ENCODE measurements at regions of chr2 and their contacts with region 1.

Region 1: DNA sequence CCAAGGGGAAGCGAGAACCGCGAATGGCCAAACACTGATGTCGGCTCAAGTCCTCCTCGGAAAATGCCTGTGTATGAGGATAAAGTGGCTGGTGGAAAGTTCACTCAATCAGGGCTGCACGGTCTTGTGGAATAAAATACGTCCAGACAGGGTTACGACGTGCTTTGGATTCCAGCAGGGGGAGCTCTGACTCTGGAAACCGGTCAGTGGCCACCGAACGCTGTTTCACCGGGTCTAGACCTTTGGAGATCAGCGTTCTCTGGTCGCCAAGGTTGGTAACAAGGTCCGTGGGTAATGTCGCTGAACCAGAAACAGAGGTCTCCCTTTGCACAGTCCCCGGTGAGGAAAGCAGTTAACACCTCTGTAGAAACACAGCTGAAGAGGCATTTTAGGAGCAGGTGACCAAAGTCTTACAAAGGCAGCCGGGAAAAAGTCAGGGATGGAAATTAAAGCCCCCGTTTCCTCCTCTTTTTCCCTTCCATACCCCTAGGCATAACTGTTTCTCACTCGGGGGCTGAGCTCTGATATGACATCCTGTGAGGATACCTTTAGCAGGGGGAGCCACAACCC is 47.8 kb downstream of the CDCA7 start:
- DNase-seq: peak; percentile 81 to 86
- ATAC-seq: peak; percentile 95 to 98
- H3K4me3 ChIP-seq: peak overlapping the region; percentile 43
- H3K27ac ChIP-seq: peak overlapping the region; percentile 70 to 80
- H3K4me1 ChIP-seq: peaks cover 17% of the 10 kb centered on the region; the same call in 2 of the 3 replicates
- CTCF ChIP-seq: peak; percentile 94
- EP300 ChIP-seq: no peak
- POLR2A ChIP-seq: no peak
- RAD21 ChIP-seq: peak; percentile 99

Region 2: GRCh38 chr2:173414823-173415322 is 12.4 kb after region 1 on chr2:
- CTCF ChIA-PET with region 1: interaction called, 42 read pairs
- POLR2A ChIA-PET with region 1: no interaction called
- DNase-seq: peak in 1 of 2 experiments; percentile 50
- ATAC-seq: peak; percentile 49 to 68; a peak in 3 of 6 replicates
- H3K4me3 ChIP-seq: no peak overlapping the region
- H3K27ac ChIP-seq: peak overlapping the region; percentile 67
- H3K4me1 ChIP-seq: peaks cover 31% of the 10 kb centered on the region
- CTCF ChIP-seq: no peak
- EP300 ChIP-seq: no peak
- POLR2A ChIP-seq: no peak
- RAD21 ChIP-seq: no peak

Region 3: GRCh38 chr2:173448938-173449471 is 46.5 kb after region 1 on chr2:
- CTCF ChIA-PET with region 1: interaction called, 121 read pairs
- POLR2A ChIA-PET with region 1: interaction called, 14 read pairs
- DNase-seq: peak; percentile 73 to 90
- ATAC-seq: peak; percentile 97 to 99
- H3K4me3 ChIP-seq: peak overlapping the region; percentile 38
- H3K27ac ChIP-seq: peak overlapping the region; percentile 80 to 90
- H3K4me1 ChIP-seq: no peaks in the 10 kb centered on the region
- CTCF ChIP-seq: peak; percentile 78
- EP300 ChIP-seq: no peak
- POLR2A ChIP-seq: peak; percentile 55; the same call in 1 of the 2 replicates
- RAD21 ChIP-seq: peak; percentile 82 to 87

Region 4: GRCh38 chr2:173667417-173667816 is 264.9 kb after region 1 on chr2:
- CTCF ChIA-PET with region 1: interaction called, 10 read pairs
- POLR2A ChIA-PET with region 1: no interaction called
- DNase-seq: peak in 1 of 2 experiments; percentile 64
- ATAC-seq: peak; percentile 89 to 94
- H3K4me3 ChIP-seq: no peak overlapping the region
- H3K27ac ChIP-seq: peak overlapping the region; percentile 8 to 23; a peak in 1 of 6 replicates
- H3K4me1 ChIP-seq: peaks cover 6% of the 10 kb centered on the region; the same call in 1 of the 3 replicates
- CTCF ChIP-seq: peak; percentile 34; the same call in 2 of the 3 replicates
- EP300 ChIP-seq: no peak
- POLR2A ChIP-seq: no peak
- RAD21 ChIP-seq: peak; percentile 62 to 80

Region 5: DNA sequence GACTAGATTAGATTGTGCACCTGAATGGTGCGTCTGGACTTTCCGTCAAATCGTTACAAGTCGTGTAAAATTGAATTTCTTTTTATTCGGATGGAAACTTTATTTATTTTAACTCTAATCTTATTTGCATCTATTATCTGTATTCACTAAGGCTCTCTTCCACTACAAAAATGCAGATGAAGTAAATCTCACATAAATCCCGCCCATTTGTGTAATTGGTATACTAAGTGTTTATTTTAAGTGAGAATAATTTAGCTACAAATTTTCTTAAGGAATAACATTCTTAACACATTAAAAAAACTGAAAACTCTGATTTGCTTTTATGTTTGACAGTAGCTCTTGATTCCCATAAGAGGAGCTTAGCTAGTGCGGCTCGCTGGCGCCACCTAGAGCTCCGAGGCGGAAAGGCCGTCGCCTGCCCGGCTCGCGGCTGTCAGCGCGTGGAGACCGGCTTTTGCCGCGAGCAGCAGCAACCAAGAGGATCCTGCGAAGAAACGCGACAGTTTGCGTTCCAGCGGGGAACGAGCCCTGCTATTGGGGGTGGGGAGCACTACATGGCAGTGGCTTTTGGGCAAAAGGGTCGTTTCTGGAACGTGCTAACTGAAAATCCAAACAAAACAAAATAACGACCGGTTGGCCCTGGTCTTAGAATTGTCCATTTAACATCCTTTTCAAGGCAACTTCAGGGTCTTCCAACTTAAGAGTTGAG is 939.0 kb after region 1 on chr2:
- CTCF ChIA-PET with region 1: interaction called, 26 read pairs
- POLR2A ChIA-PET with region 1: no interaction called
- DNase-seq: peak in 1 of 2 experiments; percentile 88
- ATAC-seq: peak; percentile 23 to 69; a peak in 4 of 6 replicates
- H3K4me3 ChIP-seq: peak overlapping the region; percentile 64; the same call in 1 of the 3 replicates
- H3K27ac ChIP-seq: peak overlapping the region; percentile 95 to 97
- H3K4me1 ChIP-seq: peaks cover 16% of the 10 kb centered on the region; the same call in 2 of the 3 replicates
- CTCF ChIP-seq: peak; percentile 96
- EP300 ChIP-seq: no peak
- POLR2A ChIP-seq: no peak
- RAD21 ChIP-seq: peak; percentile 95 to 96

Measured in A549 (cell line).